WTC11 (cell line): ENCODE measurements at regions of chr16 and their contacts with region 1.

Region 1: GRCh38 chr16:23803591-23804123 is 32.1 kb upstream of the PRKCB start:
- DNase-seq: peak; percentile 75
- ATAC-seq: peak; percentile 97
- H3K4me3 Mint-ChIP-seq: no peak overlapping the region
- H3K27ac Mint-ChIP-seq: no peak overlapping the region
- H3K4me1 Mint-ChIP-seq: peaks cover 4% of the 10 kb centered on the region; the same call in 1 of the 2 replicates
- H3K27me3 Mint-ChIP-seq: no peaks in the 10 kb centered on the region; the same call in 1 of the 2 replicates
- CTCF ChIP-seq: peak; percentile 25; the same call in 1 of the 2 replicates

Region 2: GRCh38 chr16:23784811-23785447 is 18.7 kb before region 1 on chr16:
- CTCF ChIA-PET with region 1: interaction called, 19 read pairs
- POLR2A ChIA-PET with region 1: no interaction called
- DNase-seq: no peak
- ATAC-seq: no peak
- H3K4me3 Mint-ChIP-seq: no peak overlapping the region
- H3K27ac Mint-ChIP-seq: no peak overlapping the region
- H3K4me1 Mint-ChIP-seq: peaks cover 46% of the 10 kb centered on the region
- H3K27me3 Mint-ChIP-seq: peaks cover 89% of the 10 kb centered on the region
- CTCF ChIP-seq: no peak

Region 3: DNA sequence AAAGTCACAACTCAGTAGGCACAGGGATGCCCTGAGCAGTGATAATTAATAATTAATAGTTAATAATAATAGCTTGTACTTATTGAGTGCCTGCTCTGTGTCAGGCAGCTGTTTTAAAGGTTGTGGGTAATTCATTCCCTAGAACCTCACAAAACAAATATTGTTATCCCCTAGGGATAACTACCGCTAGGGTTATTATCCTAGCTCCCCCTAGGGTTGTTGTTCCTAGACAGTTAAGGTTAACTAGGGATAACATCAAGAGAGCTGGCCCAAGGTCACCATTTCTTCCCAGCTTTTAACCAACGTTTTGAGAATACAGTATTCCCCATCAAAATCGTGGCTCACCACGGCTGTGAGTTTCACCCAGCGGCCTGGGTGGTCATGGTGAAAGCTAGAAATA is 212.3 kb after region 1 on chr16:
- CTCF ChIA-PET with region 1: interaction called, 65 read pairs
- POLR2A ChIA-PET with region 1: no interaction called
- DNase-seq: no peak
- ATAC-seq: no peak
- H3K4me3 Mint-ChIP-seq: no peak overlapping the region
- H3K27ac Mint-ChIP-seq: no peak overlapping the region
- H3K4me1 Mint-ChIP-seq: 0 out of 2 replicates have a peak, but pooled peaks cover 3% of the 10 kb centered on the region
- H3K27me3 Mint-ChIP-seq: no peaks in the 10 kb centered on the region; the same call in 1 of the 2 replicates
- CTCF ChIP-seq: no peak

Region 4: DNA sequence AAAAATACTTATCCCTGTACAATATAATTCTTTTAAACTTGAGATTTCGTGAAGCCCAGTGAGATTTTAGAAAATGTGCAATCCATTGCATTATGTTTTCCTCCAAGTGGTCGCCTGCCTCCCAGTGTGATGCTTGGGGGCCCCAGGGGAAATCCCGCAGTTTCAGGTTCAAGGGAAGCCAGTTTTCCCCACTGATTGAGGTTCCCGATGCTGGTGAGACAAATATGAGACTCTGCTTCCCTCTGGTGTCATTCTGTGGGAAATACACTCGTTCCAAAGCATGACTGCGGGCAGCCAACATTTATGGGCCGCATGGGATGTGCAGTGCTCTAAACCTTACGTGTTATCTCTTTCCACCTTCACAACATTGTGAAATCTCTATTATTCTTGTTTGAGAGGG is 233.0 kb after region 1 on chr16:
- CTCF ChIA-PET with region 1: interaction called, 62 read pairs
- POLR2A ChIA-PET with region 1: no interaction called
- DNase-seq: peak; percentile 59
- ATAC-seq: peak; percentile 87
- H3K4me3 Mint-ChIP-seq: no peak overlapping the region
- H3K27ac Mint-ChIP-seq: no peak overlapping the region
- H3K4me1 Mint-ChIP-seq: peaks cover 2% of the 10 kb centered on the region; the same call in 1 of the 2 replicates
- H3K27me3 Mint-ChIP-seq: no peaks in the 10 kb centered on the region
- CTCF ChIP-seq: peak; percentile 67